ENCODE measurements at regions of chr7 and their contacts with region 1.

Region 1: GRCh38 chr7:142811154-142811737 is 40.5 kb downstream of the PRSS2 start:
- DNase-seq: peak; percentile 52
- ATAC-seq: no peak
- H3K4me3 Mint-ChIP-seq: peak overlapping the region; percentile 68
- H3K27ac Mint-ChIP-seq: peak overlapping the region; percentile 99
- H3K4me1 Mint-ChIP-seq: peaks cover 83% of the 10 kb centered on the region
- H3K27me3 Mint-ChIP-seq: no peaks in the 10 kb centered on the region

Region 2: GRCh38 chr7:141975806-141976523 is 835.3 kb before region 1 on chr7:
- CTCF ChIA-PET with region 1: no interaction called
- POLR2A ChIA-PET with region 1: no interaction called
- intact Hi-C with region 1: loop called in 1 of 2 experiments (anchors 10 kb)
- DNase-seq: peak; percentile 87
- ATAC-seq: peak; percentile 96
- H3K4me3 Mint-ChIP-seq: peak overlapping the region; percentile 63
- H3K27ac Mint-ChIP-seq: peak overlapping the region; percentile 65
- H3K4me1 Mint-ChIP-seq: peaks cover 10% of the 10 kb centered on the region
- H3K27me3 Mint-ChIP-seq: no peaks in the 10 kb centered on the region

Region 3: GRCh38 chr7:142063551-142064442 is 747.4 kb before region 1 on chr7:
- CTCF ChIA-PET with region 1: no interaction called
- POLR2A ChIA-PET with region 1: no interaction called
- intact Hi-C with region 1: no loop called
- DNase-seq: no peak
- ATAC-seq: no peak
- H3K4me3 Mint-ChIP-seq: no peak overlapping the region
- H3K27ac Mint-ChIP-seq: no peak overlapping the region
- H3K4me1 Mint-ChIP-seq: no peaks in the 10 kb centered on the region
- H3K27me3 Mint-ChIP-seq: peaks cover 6% of the 10 kb centered on the region

Region 4: GRCh38 chr7:142425281-142425680 is 386.0 kb before region 1 on chr7:
- CTCF ChIA-PET with region 1: no interaction called
- POLR2A ChIA-PET with region 1: no interaction called
- intact Hi-C with region 1: no loop called
- DNase-seq: no peak
- ATAC-seq: no peak
- H3K4me3 Mint-ChIP-seq: no peak overlapping the region
- H3K27ac Mint-ChIP-seq: no peak overlapping the region
- H3K4me1 Mint-ChIP-seq: peaks cover 21% of the 10 kb centered on the region
- H3K27me3 Mint-ChIP-seq: no peaks in the 10 kb centered on the region

Region 5: GRCh38 chr7:142438235-142438922 is 372.9 kb before region 1 on chr7:
- CTCF ChIA-PET with region 1: interaction called, 3 read pairs
- POLR2A ChIA-PET with region 1: no interaction called
- intact Hi-C with region 1: loop called in 1 of 2 experiments (anchors 5 kb)
- DNase-seq: peak; percentile 59
- ATAC-seq: peak; percentile 49
- H3K4me3 Mint-ChIP-seq: no peak overlapping the region
- H3K27ac Mint-ChIP-seq: no peak overlapping the region
- H3K4me1 Mint-ChIP-seq: peaks cover 57% of the 10 kb centered on the region
- H3K27me3 Mint-ChIP-seq: no peaks in the 10 kb centered on the region

Region 6: DNA sequence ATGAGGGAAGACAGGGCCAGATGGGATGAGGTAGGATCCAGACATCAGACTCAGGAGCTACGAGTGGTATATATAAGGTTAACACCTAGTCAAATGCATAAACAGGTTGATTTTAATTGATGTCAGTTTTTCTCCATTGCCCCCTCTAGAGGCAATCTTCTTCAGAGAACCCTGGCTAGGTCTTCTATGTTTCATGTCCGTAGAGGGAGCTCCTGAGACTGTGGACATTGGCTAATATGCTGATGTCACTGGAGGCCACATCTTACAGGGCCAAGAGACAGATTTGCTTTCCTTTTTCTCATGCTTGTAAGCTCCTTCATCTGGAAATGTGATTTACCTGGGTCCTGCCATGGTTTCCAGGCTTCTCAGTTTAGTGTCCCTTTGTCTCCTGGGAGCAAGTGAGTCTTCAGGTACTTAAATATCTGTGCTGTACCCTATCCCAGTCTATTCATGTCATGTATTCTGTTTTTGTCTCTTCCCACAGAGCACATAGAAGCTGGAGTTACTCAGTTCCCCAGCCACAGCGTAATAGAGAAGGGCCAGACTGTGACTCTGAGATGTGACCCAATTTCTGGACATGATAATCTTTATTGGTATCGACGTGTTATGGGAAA is 223.6 kb before region 1 on chr7:
- CTCF ChIA-PET with region 1: interaction called, 3 read pairs
- POLR2A ChIA-PET with region 1: interaction called, 3 read pairs
- intact Hi-C with region 1: loop called in 1 of 2 experiments (anchors 1 kb)
- DNase-seq: peak; percentile 15
- ATAC-seq: peak; percentile 64
- H3K4me3 Mint-ChIP-seq: no peak overlapping the region
- H3K27ac Mint-ChIP-seq: no peak overlapping the region
- H3K4me1 Mint-ChIP-seq: peaks cover 10% of the 10 kb centered on the region
- H3K27me3 Mint-ChIP-seq: no peaks in the 10 kb centered on the region

Region 7: DNA sequence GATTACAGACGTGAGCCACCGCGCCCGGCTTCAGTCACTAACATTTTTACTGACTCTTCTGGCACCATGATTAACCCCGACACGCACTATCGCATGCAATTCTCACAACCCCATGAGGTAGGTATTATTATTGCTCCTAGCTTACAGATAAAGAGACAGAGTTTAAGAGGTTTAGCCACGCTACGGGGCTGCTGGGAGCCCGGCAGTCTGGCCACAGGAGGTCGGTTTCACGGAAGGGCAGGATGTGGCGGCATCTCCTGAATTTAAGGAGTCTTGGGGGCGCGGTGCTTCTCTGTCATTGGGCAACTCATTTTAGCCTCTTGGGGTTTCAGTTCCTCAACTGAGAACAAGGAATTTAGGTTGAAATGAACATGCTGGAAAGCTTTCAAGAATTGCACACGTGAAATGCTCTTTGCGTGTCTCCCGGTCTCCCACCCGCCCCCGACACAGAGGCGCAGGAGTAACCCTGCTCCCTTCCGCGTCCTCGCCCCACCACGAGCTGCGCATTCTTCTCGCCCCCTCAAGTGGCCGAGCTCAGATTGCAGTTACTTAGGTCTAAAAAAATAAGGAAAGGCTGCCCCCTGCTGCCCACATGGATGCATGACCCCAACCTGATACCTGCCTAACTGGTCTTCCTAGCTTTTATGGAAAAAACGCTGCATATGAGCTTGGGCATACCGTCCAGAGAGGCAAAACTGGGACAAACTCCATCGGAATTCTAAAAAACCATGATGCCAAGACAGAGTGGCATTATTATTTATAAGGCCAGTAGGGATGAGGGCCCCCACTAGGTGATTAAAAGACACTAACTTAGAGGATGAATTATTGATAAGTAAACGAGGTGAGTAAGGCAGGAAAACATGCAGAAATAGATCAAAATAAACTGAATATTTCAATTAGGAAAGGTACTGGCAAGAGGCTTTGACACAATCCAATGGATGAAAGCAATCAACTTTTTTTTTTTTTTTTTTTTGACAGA is 28.0 kb before region 1 on chr7:
- CTCF ChIA-PET with region 1: interaction called, 127 read pairs
- POLR2A ChIA-PET with region 1: interaction called, 82 read pairs
- intact Hi-C with region 1: loop called (anchors 1 kb)
- DNase-seq: peak; percentile 87
- ATAC-seq: peak; percentile 50
- H3K4me3 Mint-ChIP-seq: peak overlapping the region; percentile 66
- H3K27ac Mint-ChIP-seq: peak overlapping the region; percentile 90
- H3K4me1 Mint-ChIP-seq: peaks cover 6% of the 10 kb centered on the region
- H3K27me3 Mint-ChIP-seq: no peaks in the 10 kb centered on the region

Region 8: GRCh38 chr7:143008007-143008901 is 197.0 kb after region 1 on chr7:
- CTCF ChIA-PET with region 1: interaction called, 4 read pairs
- POLR2A ChIA-PET with region 1: no interaction called
- intact Hi-C with region 1: loop called in 1 of 2 experiments (anchors 5 kb)
- DNase-seq: peak; percentile 89
- ATAC-seq: peak; percentile 91
- H3K4me3 Mint-ChIP-seq: no peak overlapping the region
- H3K27ac Mint-ChIP-seq: no peak overlapping the region
- H3K4me1 Mint-ChIP-seq: peaks cover 3% of the 10 kb centered on the region
- H3K27me3 Mint-ChIP-seq: peaks cover 4% of the 10 kb centered on the region

Measured in activated CD4-positive, alpha-beta T cell treated with anti-CD3 and anti-CD28 coated beads for 36 hours (primary cell).